ENCODE measurements at regions of chr9 and their contacts with region 1.

Region 1: GRCh38 chr9:128947422-128948301 is at the starts of genes DOLK and NUP188:
- H3K4me3 Mint-ChIP-seq: peak within 1 kb of the TSS; percentile 94
- H3K27ac Mint-ChIP-seq: peak within 1 kb of the TSS; percentile 90
- H3K4me1 Mint-ChIP-seq: peaks cover 20% of the 10 kb centered on the region
- H3K27me3 Mint-ChIP-seq: no peaks in the 10 kb centered on the region

Region 2: GRCh38 chr9:128098297-128099230 is 849.1 kb before region 1 on chr9:
- intact Hi-C with region 1: no loop called
- H3K4me3 Mint-ChIP-seq: peak overlapping the region; percentile 97
- H3K27ac Mint-ChIP-seq: peak overlapping the region; percentile 95
- H3K4me1 Mint-ChIP-seq: peaks cover 84% of the 10 kb centered on the region
- H3K27me3 Mint-ChIP-seq: no peaks in the 10 kb centered on the region

Region 3: GRCh38 chr9:128455849-128456612 is 491.6 kb before region 1 on chr9 and contains the start of gene ODF2:
- intact Hi-C with region 1: no loop called
- H3K4me3 Mint-ChIP-seq: peak within 1 kb of the TSS; percentile 94
- H3K27ac Mint-ChIP-seq: peak within 1 kb of the TSS; percentile 86
- H3K4me1 Mint-ChIP-seq: peaks cover 20% of the 10 kb centered on the region
- H3K27me3 Mint-ChIP-seq: peaks cover 12% of the 10 kb centered on the region

Region 4: GRCh38 chr9:128881901-128882681 is 65.6 kb before region 1 on chr9 and contains the starts of genes KYAT1 and LRRC8A:
- intact Hi-C with region 1: loop called (anchors 10 kb)
- H3K4me3 Mint-ChIP-seq: peak within 1 kb of the TSS; percentile 99
- H3K27ac Mint-ChIP-seq: peak within 1 kb of the TSS; percentile 96
- H3K4me1 Mint-ChIP-seq: peaks cover 65% of the 10 kb centered on the region
- H3K27me3 Mint-ChIP-seq: no peaks in the 10 kb centered on the region

Region 5: DNA sequence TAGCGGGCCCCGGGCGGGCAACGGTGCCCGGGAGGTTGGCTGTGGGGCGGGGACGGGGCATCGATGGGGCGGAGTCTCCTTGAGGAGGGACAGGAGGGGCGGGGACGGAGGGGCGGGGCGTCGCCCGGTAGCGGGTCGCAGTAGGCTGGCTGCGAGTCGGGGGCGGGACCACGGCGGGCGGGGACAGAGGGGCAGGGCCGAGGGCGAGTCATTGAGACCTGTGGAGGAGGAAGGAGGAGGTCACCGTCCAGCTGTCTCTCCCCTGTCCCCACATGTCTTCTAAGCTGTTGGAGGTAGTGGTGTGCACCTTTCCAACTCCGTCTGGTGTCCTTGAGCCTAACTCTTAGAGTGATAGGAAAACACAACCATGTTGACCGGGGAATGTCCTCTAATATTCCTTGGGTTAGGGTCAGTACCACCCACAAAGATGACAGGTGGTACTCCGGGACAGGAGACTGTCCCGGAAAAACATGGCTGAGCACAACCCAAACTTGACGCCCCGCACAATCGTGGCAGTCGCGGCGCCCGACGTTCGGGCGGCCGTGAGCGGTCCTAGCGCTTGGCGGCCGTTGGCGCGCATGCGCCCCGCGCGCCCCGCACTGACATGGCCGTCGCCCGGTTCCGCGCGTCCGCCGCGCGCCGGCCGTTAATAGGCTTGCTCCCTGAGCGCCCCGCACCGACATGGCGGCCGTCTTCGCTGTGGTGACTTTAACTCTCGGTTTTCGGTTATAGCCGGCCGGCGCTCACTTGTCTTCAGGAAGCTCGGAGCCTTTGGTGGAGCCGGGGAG is 163.3 kb after region 1 on chr9 and contains the starts of genes CRAT and PTPA:
- intact Hi-C with region 1: no loop called
- H3K4me3 Mint-ChIP-seq: peak within 1 kb of the TSS; percentile 92
- H3K27ac Mint-ChIP-seq: peak within 1 kb of the TSS; percentile 97
- H3K4me1 Mint-ChIP-seq: peaks cover 61% of the 10 kb centered on the region
- H3K27me3 Mint-ChIP-seq: peaks cover 5% of the 10 kb centered on the region

Region 6: DNA sequence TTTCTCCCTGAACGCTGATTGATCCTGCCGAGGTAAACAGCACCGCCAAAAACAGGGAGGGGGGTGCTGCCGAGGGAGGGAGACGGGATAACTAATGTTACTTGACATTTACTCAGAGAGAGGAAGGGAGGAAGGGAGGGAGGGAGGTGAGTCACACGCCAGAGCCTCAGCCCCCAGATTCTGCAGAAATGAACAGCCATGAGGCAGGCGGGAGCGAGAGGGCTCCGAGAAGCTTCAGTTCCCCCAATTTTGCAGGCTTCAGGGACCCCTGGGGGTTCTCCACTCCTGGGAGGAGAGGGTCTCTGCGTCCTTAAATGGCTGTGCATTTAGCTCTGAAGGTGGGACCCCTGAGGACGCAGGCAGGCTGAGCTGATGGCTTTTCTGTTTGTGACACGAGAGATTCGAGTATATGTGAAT is 289.5 kb after region 1 on chr9:
- intact Hi-C with region 1: no loop called
- H3K4me3 Mint-ChIP-seq: peak overlapping the region; percentile 48
- H3K27ac Mint-ChIP-seq: peak overlapping the region; percentile 64
- H3K4me1 Mint-ChIP-seq: peaks cover 57% of the 10 kb centered on the region
- H3K27me3 Mint-ChIP-seq: peaks cover 10% of the 10 kb centered on the region